K562 (cell line): ENCODE measurements at regions of chr2 and their contacts with region 1.

Region 1: GRCh38 chr2:201860636-201861066 is 54.3 kb downstream of the CDK15 start:
- DNase-seq: peak; percentile 37 to 63 (median 45)
- ATAC-seq: peak; percentile 89
- H3K4me3 ChIP-seq: no peak overlapping the region
- H3K27ac ChIP-seq: no peak overlapping the region
- H3K4me1 ChIP-seq: no peaks in the 10 kb centered on the region; a peak in 1 of 5 replicates
- H3K27me3 ChIP-seq: peaks cover 0 to 26% of the 10 kb centered on the region in 2 experiments; a peak in 3 of 5 replicates
- CTCF ChIP-seq: peak; percentile 70 to 77 (median 76); a peak in 5 of 6 replicates
- EP300 ChIP-seq: no peak
- POLR2A ChIP-seq: no peak
- RAD21 ChIP-seq: peak; percentile 69 to 90

Region 2: DNA sequence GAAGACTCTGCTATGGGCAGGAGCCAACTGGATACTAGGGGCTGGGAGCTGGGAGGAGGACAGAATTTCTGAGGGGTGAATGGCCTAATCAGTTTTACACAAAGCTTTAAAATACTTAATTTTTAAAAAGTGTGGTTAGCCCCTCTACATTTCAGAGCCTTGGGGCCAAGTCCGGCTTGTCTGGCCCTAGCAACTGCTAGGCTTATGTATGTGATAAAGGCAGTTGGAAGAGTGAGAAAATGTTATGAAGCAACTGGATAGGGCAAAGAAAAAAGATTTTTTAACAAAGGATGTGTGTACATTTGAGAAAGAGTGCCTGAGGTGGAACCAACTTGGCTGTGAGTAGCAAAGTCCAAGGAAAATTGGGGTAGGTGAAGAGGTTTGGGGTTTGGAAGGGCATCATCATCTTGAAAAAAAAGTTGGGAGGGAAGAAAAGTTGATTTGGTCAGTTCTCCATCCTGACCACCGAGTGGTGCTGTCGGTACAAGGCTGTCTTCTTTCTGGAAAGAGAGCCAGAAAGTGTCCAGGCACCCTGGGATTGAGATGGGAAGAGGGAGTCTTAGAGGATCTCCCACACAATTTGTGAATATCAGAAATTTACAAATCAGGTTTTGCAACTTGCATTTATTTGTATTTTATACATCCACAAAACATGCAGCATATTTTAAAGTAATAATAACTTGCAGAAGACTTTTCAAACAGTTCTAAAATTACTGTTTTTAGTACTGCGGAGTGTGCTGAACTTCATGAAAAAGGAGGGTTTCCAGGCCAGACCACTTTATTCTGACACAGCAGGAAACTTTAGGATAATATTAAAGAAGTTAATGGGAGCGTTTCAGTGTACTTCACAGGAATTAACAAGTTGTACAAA is 64.8 kb before region 1 on chr2:
- CTCF ChIA-PET with region 1: no interaction called
- POLR2A ChIA-PET with region 1: no interaction called
- in situ Hi-C with region 1: no loop called
- intact Hi-C with region 1: loop called (anchors 5 kb)
- DNase-seq: peak; percentile 34 to 47 (median 44)
- ATAC-seq: peak; percentile 76
- H3K4me3 ChIP-seq: no peak overlapping the region
- H3K27ac ChIP-seq: no peak overlapping the region
- H3K4me1 ChIP-seq: no peaks in the 10 kb centered on the region; a peak in 1 of 5 replicates
- H3K27me3 ChIP-seq: no peaks in the 10 kb centered on the region
- CTCF ChIP-seq: peak; percentile 59 to 65 (median 60)
- EP300 ChIP-seq: no peak
- POLR2A ChIP-seq: no peak
- RAD21 ChIP-seq: peak; percentile 42 to 67

Region 3: GRCh38 chr2:201964631-201965206 is 104.1 kb after region 1 on chr2:
- CTCF ChIA-PET with region 1: no interaction called
- POLR2A ChIA-PET with region 1: no interaction called
- in situ Hi-C with region 1: no loop called
- intact Hi-C with region 1: loop called (anchors 5 kb)
- DNase-seq: no peak
- ATAC-seq: no peak
- H3K4me3 ChIP-seq: no peak overlapping the region
- H3K27ac ChIP-seq: no peak overlapping the region
- H3K4me1 ChIP-seq: no peaks in the 10 kb centered on the region; a peak in 1 of 5 replicates
- H3K27me3 ChIP-seq: peaks cover 12 to 62% of the 10 kb centered on the region in 2 experiments; a peak in 4 of 5 replicates
- CTCF ChIP-seq: no peak
- EP300 ChIP-seq: no peak
- POLR2A ChIP-seq: no peak
- RAD21 ChIP-seq: no peak

Region 4: DNA sequence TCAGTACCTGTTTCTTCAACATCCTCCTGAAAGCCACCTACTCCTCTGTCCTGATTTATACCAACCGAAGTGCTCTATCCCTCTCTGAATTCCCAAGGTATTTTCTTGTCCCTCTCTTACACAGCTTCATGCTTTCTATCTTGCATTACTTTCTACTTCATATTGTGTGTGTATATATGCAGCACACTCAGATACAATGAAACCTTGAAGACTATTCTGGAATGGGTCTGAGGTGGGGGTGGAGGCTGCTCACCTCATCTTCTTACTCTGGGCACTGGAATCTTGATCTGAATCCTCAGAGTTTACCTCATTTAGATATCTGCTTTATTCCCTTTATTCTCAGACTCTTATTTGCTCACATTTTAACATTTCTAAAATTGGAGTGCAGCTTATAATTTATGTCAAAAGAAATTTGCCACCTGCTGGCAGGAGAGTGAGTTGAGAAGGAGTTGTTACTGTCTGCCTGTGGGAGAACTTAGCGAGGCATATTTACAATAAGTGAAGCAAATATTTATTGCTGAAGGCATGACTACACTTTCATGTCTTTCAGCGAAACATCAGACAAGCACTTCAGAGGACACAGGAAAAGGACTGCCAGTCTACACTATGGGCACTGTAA is 195.8 kb after region 1 on chr2:
- CTCF ChIA-PET with region 1: no interaction called
- POLR2A ChIA-PET with region 1: no interaction called
- in situ Hi-C with region 1: no loop called
- intact Hi-C with region 1: loop called (anchors 10 kb)
- DNase-seq: no peak
- ATAC-seq: no peak
- H3K4me3 ChIP-seq: no peak overlapping the region
- H3K27ac ChIP-seq: no peak overlapping the region
- H3K4me1 ChIP-seq: no peaks in the 10 kb centered on the region
- H3K27me3 ChIP-seq: peaks cover 2 to 12% of the 10 kb centered on the region in 2 experiments; a peak in 3 of 5 replicates
- CTCF ChIP-seq: peak in 1 of 3 experiments; percentile 5; a peak in 1 of 6 replicates
- EP300 ChIP-seq: no peak
- POLR2A ChIP-seq: no peak
- RAD21 ChIP-seq: peak; percentile 18 to 25; a peak in 2 of 4 replicates

Region 5: DNA sequence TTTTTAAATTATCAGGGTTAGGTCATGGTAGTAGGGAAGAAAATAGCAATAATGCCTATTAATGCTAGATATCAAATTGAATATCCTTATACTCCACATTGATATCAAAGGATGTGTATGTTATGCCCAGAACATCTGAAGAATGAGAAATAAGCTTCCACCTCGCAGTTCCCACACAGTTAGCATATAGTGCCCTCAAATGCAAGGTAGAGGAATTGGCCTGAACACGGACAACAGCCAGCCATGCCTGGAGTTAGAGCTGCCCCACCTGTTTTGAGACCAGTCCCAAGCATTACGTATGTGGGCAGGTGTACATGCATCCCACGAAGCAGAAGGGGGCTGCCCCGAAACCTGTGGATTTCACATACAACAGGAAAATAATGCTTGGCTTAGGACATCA is 298.1 kb after region 1 on chr2:
- CTCF ChIA-PET with region 1: no interaction called
- POLR2A ChIA-PET with region 1: no interaction called
- in situ Hi-C with region 1: no loop called
- intact Hi-C with region 1: loop called (anchors 5 kb)
- DNase-seq: no peak
- ATAC-seq: peak; percentile 63
- H3K4me3 ChIP-seq: no peak overlapping the region
- H3K27ac ChIP-seq: no peak overlapping the region
- H3K4me1 ChIP-seq: no peaks in the 10 kb centered on the region
- H3K27me3 ChIP-seq: peaks cover 3 to 21% of the 10 kb centered on the region in 2 experiments; a peak in 3 of 5 replicates
- CTCF ChIP-seq: peak in 2 of 3 experiments; percentile 19 to 20; a peak in 2 of 6 replicates
- EP300 ChIP-seq: no peak
- POLR2A ChIP-seq: no peak
- RAD21 ChIP-seq: peak in 1 of 2 experiments; percentile 53; a peak in 2 of 4 replicates

Region 6: DNA sequence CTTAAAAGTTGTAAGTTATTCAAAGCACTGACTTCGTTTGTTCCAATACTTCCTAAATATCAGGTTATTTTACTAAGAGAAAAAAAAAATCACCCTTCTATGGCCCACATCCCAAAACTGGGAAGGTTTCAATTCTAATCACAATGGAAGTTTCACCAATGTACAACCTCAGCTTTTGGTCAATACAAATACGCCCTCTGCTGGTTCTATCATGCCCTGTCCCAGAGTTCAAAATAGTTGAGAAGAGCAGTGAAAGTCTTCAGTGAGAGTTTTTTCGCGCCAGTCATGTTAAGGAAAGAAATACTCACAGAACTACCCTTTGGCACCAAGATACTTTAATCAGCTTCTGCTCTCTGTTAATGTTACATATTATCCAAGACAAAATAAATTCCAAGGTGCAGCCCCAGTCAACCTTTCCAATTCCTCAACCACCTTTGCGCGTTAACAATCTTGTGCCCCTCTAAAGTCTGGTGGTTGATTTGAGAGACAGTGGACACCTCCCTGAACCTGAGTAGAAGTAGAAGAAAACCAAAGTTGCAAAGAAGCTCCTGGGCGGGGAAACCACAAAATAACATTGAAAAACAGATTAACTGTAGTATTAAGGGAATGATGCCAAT is 317.8 kb after region 1 on chr2:
- CTCF ChIA-PET with region 1: interaction called, 6 read pairs
- POLR2A ChIA-PET with region 1: no interaction called
- in situ Hi-C with region 1: loop called (anchors 10 kb)
- intact Hi-C with region 1: loop called (anchors 1 kb)
- DNase-seq: peak; percentile 41 to 59 (median 42)
- ATAC-seq: peak; percentile 93
- H3K4me3 ChIP-seq: no peak overlapping the region
- H3K27ac ChIP-seq: no peak overlapping the region
- H3K4me1 ChIP-seq: no peaks in the 10 kb centered on the region; a peak in 1 of 5 replicates
- H3K27me3 ChIP-seq: peaks cover 0 to 5% of the 10 kb centered on the region in 2 experiments; a peak in 2 of 5 replicates
- CTCF ChIP-seq: peak; percentile 60 to 75 (median 60); a peak in 5 of 6 replicates
- EP300 ChIP-seq: no peak
- POLR2A ChIP-seq: no peak
- RAD21 ChIP-seq: peak; percentile 72 to 86

Region 7: GRCh38 chr2:202185816-202186221 is 325.2 kb after region 1 on chr2:
- CTCF ChIA-PET with region 1: no interaction called
- POLR2A ChIA-PET with region 1: no interaction called
- in situ Hi-C with region 1: loop called (anchors 10 kb)
- intact Hi-C with region 1: no loop called
- DNase-seq: no peak
- ATAC-seq: no peak
- H3K4me3 ChIP-seq: no peak overlapping the region
- H3K27ac ChIP-seq: no peak overlapping the region
- H3K4me1 ChIP-seq: no peaks in the 10 kb centered on the region; a peak in 1 of 5 replicates
- H3K27me3 ChIP-seq: peaks cover 11 to 35% of the 10 kb centered on the region in 2 experiments; a peak in 4 of 5 replicates
- CTCF ChIP-seq: no peak
- EP300 ChIP-seq: no peak
- POLR2A ChIP-seq: no peak
- RAD21 ChIP-seq: no peak